ENCODE measurements at regions of chr20 and their contacts with region 1.

Region 1: GRCh38 chr20:12788632-12789299 is 220.0 kb upstream of the SPTLC3 start:
- DNase-seq: no peak
- ATAC-seq: no peak
- H3K4me3 ChIP-seq: no peak overlapping the region
- H3K4me1 ChIP-seq: no peaks in the 10 kb centered on the region
- CTCF ChIP-seq: no peak

Region 2: DNA sequence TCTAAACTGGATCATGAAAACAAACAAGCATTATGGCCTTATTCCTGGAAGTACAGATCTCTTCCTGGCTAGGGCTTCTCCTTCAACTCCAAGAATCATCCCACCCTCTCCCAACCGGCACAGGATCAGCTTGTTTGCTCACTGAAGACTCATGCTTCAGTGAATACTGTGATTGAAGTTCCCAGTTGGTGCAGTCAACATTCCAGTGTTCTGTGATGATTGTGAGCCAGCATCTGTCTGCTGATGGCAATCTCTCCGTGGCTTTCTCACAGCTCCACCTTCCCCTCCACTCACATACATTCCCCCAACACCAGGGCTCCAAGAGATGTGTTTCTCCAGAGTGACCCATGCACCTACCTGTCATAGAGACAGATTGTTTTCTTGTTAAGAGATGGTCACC is 1292.4 kb before region 1 on chr20:
- intact Hi-C with region 1: loop called in 1 of 2 experiments (anchors 10 kb)
- DNase-seq: no peak
- ATAC-seq: no peak
- H3K4me3 ChIP-seq: no peak overlapping the region
- H3K4me1 ChIP-seq: no peaks in the 10 kb centered on the region
- CTCF ChIP-seq: no peak